IMR-90 (cell line): ENCODE measurements at regions of chr16 and their contacts with region 1.

Region 1: GRCh38 chr16:49340466-49340865 is 33.1 kb upstream of the C16orf78 start:
- DNase-seq: no peak
- ATAC-seq: no peak
- H3K4me3 ChIP-seq: no peak overlapping the region
- H3K27ac ChIP-seq: no peak overlapping the region
- H3K4me1 ChIP-seq: no peaks in the 10 kb centered on the region
- H3K27me3 ChIP-seq: no peaks in the 10 kb centered on the region
- CTCF ChIP-seq: no peak
- POLR2A ChIP-seq: no peak
- RAD21 ChIP-seq: no peak

Region 2: GRCh38 chr16:48687421-48688038 is 652.9 kb before region 1 on chr16:
- CTCF ChIA-PET with region 1: no interaction called
- POLR2A ChIA-PET with region 1: no interaction called
- dilution Hi-C with region 1: no loop called
- in situ Hi-C with region 1: loop called (anchors 5 kb)
- intact Hi-C with region 1: no loop called
- DNase-seq: peak; percentile 67
- ATAC-seq: peak; percentile 100
- H3K4me3 ChIP-seq: no peak overlapping the region
- H3K27ac ChIP-seq: no peak overlapping the region
- H3K4me1 ChIP-seq: no peaks in the 10 kb centered on the region
- H3K27me3 ChIP-seq: no peaks in the 10 kb centered on the region; the same call in 1 of the 2 replicates
- CTCF ChIP-seq: peak; percentile 84
- POLR2A ChIP-seq: no peak
- RAD21 ChIP-seq: peak; percentile 81

Region 3: GRCh38 chr16:49399594-49400364 is 59.3 kb after region 1 on chr16:
- CTCF ChIA-PET with region 1: no interaction called
- POLR2A ChIA-PET with region 1: no interaction called
- dilution Hi-C with region 1: no loop called
- in situ Hi-C with region 1: no loop called
- intact Hi-C with region 1: no loop called
- DNase-seq: no peak
- ATAC-seq: no peak
- H3K4me3 ChIP-seq: no peak overlapping the region
- H3K27ac ChIP-seq: no peak overlapping the region
- H3K4me1 ChIP-seq: no peaks in the 10 kb centered on the region
- H3K27me3 ChIP-seq: no peaks in the 10 kb centered on the region
- CTCF ChIP-seq: no peak
- POLR2A ChIP-seq: no peak
- RAD21 ChIP-seq: no peak